Activated CD4-positive, alpha-beta memory T cell treated with anti-CD3 and anti-CD28 coated beads, Interleukin-2, amount 10 ng/mL, durations not matched to agents 7 days and 5 days (primary cell): ENCODE measurements at regions of chr11 and their contacts with region 1.

Region 1: DNA sequence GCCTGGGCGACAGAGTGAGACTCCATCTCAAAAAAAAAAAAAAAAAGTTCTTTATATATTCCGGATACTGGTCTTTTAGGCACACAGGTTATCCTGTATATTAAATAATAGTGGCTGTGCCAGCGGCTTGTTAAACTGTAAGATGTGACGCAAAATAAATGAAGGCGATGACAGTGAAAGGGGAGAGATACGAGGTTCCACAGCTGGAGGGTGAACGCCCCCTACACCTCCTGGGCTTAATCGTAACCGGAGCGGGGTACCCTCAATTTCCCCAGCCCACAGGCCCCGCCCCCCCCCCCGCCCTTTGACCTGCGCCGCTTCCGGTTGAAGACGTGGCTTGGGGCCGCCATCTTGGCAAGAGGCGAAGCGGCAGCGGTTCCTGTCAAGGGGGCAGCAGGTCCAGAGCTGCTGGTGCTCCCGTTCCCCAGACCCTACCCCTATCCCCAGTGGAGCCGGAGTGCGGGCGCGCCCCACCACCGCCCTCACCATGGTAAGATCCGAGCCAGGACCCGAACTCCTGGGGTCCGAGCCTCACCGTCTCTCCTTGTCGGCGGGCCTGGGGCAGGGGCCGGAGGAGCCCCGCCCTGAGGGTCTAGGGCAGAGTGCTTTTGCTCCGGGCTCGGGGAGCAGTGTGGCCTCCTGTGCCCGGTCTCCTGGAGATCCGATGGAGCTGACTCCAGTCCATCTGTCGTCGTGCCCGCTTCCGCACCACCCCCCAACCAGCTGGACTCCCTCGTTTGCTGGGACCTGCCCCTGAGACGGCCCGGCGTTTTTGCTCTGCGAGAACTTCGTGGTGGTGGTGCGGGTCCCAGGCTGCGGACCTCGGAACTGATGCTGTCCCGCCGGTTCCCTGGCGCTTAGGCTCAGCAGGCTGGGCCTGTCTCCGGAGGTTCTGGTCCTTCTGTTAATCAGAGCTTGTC is at the start of gene ARCN1:
- DNase-seq: peak; percentile 82
- H3K4me3 Mint-ChIP-seq: peak within 1 kb of the TSS; percentile 93
- H3K27ac Mint-ChIP-seq: peak within 1 kb of the TSS; percentile 92
- H3K4me1 Mint-ChIP-seq: peaks cover 45% of the 10 kb centered on the region
- H3K27me3 Mint-ChIP-seq: no peaks in the 10 kb centered on the region
- total RNA-seq, gene ARCN1: 138 to 141 TPM

Region 2: GRCh38 chr11:118366287-118366686 is 206.0 kb before region 1 on chr11:
- CTCF ChIA-PET with region 1: no interaction called
- POLR2A ChIA-PET with region 1: no interaction called
- DNase-seq: no peak
- H3K4me3 Mint-ChIP-seq: no peak overlapping the region
- H3K27ac Mint-ChIP-seq: no peak overlapping the region
- H3K4me1 Mint-ChIP-seq: peaks cover 23% of the 10 kb centered on the region
- H3K27me3 Mint-ChIP-seq: no peaks in the 10 kb centered on the region

Region 3: DNA sequence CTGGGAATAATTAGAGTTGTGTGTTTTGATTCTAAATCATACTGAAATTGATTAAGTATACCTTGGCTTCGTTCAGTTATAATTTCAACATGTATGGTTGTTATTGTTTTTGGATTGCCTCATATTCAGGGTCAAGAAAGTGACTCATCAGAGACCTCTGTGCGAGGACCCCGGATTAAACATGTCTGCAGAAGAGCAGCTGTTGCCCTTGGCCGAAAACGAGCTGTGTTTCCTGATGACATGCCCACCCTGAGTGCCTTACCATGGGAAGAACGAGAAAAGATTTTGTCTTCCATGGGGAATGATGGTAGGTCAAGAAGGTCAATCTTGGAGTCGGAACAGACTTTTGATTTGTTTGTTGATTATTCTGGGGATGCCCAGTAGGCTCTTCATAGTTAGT is 95.6 kb before region 1 on chr11:
- CTCF ChIA-PET with region 1: no interaction called
- POLR2A ChIA-PET with region 1: no interaction called
- DNase-seq: no peak
- H3K4me3 Mint-ChIP-seq: no peak overlapping the region
- H3K27ac Mint-ChIP-seq: no peak overlapping the region
- H3K4me1 Mint-ChIP-seq: peaks cover 14% of the 10 kb centered on the region
- H3K27me3 Mint-ChIP-seq: no peaks in the 10 kb centered on the region

Region 4: GRCh38 chr11:118530408-118531339 is 41.6 kb before region 1 on chr11 and contains the start of gene TMEM25:
- CTCF ChIA-PET with region 1: no interaction called
- POLR2A ChIA-PET with region 1: interaction called, 10 read pairs
- DNase-seq: peak; percentile 72
- H3K4me3 Mint-ChIP-seq: peak within 1 kb of the TSS; percentile 83
- H3K27ac Mint-ChIP-seq: peak within 1 kb of the TSS; percentile 40
- H3K4me1 Mint-ChIP-seq: peaks cover 24% of the 10 kb centered on the region
- H3K27me3 Mint-ChIP-seq: no peaks in the 10 kb centered on the region
- total RNA-seq, gene TMEM25: 5.3 to 6.4 TPM